ENCODE measurements at regions of chr1 and their contacts with region 1.

Region 1: DNA sequence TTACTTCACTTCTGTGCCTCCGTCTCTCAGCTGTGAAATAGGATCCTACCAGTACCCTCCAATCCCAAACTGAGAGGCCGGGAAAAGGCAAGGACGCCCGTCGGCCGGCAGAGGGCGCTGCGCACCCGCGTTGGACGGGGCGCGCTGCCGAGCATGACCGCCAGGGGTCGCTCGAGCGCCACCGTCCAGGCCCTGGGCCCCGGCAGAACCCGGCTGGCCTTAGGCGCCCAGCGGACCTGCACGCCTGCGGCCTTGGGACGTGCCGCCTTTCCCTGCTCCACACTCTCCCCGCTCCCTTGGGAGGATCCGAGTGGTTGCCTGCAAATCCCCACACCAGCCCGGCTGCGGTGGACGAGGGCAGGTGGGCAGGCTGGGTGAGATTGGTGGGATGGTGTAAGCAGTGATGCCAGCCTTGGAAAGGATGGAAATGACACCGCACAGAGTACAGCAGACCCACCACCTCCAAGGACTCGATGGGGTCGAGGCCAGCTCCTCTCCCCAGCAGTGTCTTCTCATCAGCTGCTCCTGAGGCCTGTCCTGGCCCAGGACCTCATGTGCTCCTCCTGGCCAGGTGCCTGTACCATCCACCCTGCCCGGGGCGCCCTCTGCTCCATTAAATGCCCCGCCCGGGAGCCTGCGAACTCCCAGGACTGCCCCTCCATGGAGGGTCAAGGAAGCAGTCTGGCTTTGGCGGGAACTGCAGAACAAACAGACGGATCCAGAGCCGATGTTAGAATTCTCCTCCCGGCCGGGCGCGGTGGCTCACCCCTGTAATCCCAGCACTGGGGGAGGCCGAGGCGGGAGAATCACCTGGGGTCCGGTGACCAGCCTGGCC is 47.4 kb upstream of the LBR start:
- DNase-seq: no peak
- ATAC-seq: peak; percentile 90
- H3K4me3 ChIP-seq: peak overlapping the region in 1 of 2 experiments; percentile 26; a peak in 2 of 4 replicates
- H3K27ac ChIP-seq: no peak overlapping the region
- H3K4me1 ChIP-seq: no peaks in the 10 kb centered on the region
- H3K27me3 ChIP-seq: no peaks in the 10 kb centered on the region
- CTCF ChIP-seq: peak; percentile 100

Region 2: DNA sequence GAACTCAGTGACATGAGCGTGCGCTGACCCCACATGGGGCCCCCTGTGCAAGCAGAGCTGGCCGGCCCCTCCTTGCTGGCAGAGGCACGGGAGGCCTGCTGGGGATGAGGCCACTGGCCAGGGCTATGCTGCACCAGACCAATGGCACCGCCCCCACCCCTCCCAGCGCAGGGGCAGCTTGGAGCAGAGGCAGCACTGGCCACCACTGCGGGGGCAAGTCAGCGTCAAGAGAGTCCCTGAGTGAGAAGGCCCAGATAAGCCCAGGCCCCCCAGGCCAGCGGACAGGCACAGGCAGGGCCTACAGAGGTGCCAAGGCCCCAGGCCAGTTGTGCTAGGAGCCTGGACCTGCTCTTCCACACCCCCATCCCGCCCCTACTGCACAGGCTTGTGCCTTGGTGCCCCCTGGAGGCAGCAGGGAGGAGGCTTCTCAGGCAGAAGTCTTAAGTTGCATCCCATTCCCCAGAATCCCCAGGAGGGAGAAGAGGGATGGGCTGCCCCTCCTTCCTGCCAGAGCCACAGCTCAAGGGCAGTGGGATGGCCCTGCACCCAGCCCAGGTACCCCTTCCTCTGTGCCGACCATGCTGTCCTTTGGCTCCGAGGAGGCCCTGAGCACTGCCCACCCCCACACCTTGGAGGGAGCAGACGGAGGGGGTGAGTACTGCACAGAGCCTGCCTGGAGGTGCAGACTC is 370.5 kb after region 1 on chr1:
- CTCF ChIA-PET with region 1: interaction called, 3 read pairs
- POLR2A ChIA-PET with region 1: no interaction called
- in situ Hi-C with region 1: no loop called
- intact Hi-C with region 1: loop called (anchors 2 kb)
- DNase-seq: peak; percentile 10
- ATAC-seq: peak; percentile 89
- H3K4me3 ChIP-seq: no peak overlapping the region
- H3K27ac ChIP-seq: no peak overlapping the region
- H3K4me1 ChIP-seq: 0 out of 2 replicates have a peak, but pooled peaks cover 5% of the 10 kb centered on the region
- H3K27me3 ChIP-seq: no peaks in the 10 kb centered on the region
- CTCF ChIP-seq: peak; percentile 88

Measured in Panc1 (cell line).